Posterior vena cava (tissue), 2 donors: ENCODE measurements at regions of chr14 and their contacts with region 1.

Region 1: DNA sequence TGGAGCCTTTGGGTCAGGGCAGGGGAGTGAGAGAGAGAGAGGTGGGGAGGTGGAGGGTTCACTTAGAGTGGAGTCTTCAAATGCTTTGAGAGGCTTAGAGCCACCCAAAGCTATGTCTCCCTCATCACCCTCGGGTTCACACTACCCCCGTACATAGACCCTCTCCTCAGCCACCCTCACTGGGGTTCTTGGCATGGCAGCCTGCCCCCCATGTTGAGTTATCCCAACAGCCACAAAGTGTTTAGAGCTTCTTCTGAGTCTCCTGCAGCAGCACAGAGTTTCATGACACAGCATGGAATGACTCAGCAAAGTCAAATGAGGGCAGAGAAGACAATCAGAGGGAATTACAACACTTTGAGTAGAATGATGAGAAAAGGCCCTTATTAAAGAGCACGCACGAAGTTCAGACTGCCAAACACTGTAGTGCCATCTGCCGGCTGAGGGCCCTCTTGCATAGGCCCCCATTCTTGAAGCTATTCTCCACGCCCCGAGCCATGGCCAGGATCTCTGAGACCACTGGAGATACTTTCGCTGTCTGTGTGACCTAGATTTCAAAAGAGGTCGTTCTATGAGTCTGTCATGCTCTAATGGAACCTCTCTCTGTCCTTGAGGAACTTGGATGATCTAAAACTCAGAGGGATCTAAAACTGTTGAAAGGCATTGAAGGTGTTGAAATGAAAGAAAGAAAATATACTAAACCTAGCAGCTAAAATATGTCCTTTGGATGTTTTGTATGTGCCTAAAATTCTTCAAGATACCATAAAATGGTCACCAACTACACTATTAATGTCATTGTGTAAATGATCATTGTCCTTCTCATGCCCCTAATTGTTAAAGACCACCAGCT is 221.9 kb downstream of the PELI2 start:
- DNase-seq: peak; percentile 93

Region 2: DNA sequence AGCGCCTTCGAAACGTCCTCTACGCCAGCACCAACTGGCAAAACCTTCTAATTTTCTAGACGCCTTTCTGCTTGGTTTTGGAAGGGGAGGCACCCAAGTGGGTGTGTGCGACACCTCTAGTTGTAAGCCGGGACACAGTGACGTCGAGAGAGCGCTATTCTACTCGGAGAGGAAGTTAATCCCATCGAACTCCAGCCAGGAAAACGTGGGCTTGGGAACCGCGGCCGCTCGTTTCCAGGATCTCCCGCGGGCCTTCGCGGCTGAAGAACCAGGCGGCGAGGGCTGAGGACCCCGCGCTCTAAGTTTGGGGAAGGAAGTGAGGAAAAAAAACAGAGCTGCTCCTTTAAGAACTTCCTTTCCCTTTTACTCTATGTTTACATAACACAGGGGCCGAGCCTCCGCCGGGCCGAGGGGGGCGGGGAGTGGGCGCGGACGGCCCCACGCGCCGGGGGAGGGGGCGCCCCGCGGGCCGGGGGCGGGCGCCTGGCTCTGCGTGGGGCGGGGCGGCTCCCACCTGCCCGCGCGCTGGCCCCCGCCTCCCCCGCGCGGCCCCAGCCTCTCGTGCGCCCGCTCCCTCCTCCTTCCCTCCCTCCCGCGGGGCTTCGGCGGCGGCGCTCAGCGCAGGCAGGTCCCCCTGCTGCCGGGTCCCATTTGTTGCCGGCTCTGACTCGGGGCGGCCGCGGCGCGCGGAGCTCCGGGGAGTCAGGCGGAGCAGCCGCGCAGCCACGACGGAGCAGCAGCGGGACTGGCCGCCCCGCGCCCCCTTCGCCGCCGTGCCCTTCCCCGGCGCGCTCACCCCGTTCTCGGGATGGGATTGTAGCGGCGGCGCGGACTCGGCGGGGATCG is 222.1 kb before region 1 on chr14 and contains the start of gene PELI2:
- intact Hi-C with region 1: loop called in 1 of 2 experiments (anchors 5 kb)
- DNase-seq: peak; percentile 94
- total RNA-seq, gene PELI2: 16.0 to 17.5 TPM

Region 3: DNA sequence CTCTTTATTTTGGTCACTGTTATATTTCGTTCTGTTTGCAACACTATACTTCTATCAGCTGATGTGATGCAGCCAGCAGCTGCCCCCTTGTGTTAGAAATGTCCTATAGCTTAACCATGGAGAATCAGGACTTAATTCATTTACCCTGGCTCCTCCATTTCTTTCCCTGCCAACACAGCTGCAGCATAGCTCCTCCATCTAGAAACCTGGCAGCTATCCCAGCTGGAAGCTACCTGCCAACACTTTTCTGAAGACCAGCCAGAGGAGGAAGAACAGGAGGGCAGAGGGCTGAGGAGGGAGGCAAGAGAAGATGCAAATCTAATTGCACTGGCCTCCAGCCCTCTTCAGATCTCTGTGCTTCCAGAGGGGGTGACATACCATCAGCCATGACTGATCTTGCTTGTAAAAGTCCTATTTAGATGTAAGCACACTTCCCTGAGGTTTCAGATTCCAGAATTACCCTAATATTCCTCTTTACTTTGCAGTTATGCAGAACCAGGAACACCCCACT is 82.7 kb after region 1 on chr14:
- intact Hi-C with region 1: loop called in 1 of 2 experiments (anchors 10 kb)
- DNase-seq: no peak